ENCODE measurements at regions of chr20 and their contacts with region 1.

Region 1: GRCh38 chr20:22861990-22862389 is 173.1 kb upstream of the SSTR4 start:
- DNase-seq: peak; percentile 43 to 68
- ATAC-seq: peak; percentile 75 to 93 (median 84)
- H3K4me3 ChIP-seq: no peak overlapping the region
- H3K27ac ChIP-seq: peak overlapping the region in 9 of 10 donors; percentile 39 to 85 (median 71)
- H3K4me1 ChIP-seq: peaks cover 0 to 35% (median 5%) of the 10 kb centered on the region in 9 donors
- H3K27me3 ChIP-seq: peaks cover 0 to 6% (median 0%) of the 10 kb centered on the region in 7 donors
- CTCF ChIP-seq: no peak

Region 2: DNA sequence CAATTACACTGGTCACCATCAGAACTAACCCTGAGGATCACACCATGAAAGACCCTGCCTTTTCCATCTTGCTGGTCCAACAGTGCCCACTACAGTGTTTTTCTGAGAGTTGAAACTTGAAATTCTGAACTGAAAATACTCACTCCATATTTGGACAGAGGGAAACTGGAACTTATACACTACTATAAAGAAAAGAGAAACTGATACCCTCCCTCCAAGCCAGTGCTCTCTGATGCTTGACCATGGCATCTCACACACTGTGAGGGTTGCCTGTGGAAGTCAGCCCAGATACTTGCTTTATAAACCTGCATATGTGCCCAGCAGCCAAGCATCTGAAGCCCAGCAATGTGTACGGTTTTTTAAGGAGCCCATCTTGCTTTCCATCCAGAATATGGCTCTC is 386.3 kb before region 1 on chr20:
- intact Hi-C with region 1: no loop called
- DNase-seq: no peak
- ATAC-seq: no peak
- H3K4me3 ChIP-seq: no peak overlapping the region
- H3K27ac ChIP-seq: no peak overlapping the region
- H3K4me1 ChIP-seq: no peaks in the 10 kb centered on the region
- H3K27me3 ChIP-seq: peaks cover 0 to 39% (median 13%) of the 10 kb centered on the region in 7 donors
- CTCF ChIP-seq: no peak

Region 3: DNA sequence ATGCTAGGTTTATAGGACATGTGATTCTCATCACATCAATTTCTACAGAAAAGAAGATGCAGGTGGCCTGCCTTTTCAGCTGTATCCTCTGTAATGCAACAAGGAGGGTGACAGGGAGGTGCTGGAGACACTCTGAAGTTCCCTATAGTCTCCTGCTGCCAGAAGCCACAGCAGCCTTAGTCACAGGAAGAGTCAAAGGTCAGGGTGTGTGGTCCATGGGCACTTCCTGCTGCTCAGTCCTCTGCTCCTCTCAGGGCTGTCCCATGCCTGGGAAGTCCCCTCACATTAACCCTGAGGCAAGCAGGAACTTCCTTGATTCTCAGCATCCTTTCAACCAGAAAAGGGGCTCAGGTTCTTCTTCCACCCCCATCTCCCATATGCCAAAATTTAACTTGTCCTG is 132.8 kb before region 1 on chr20:
- intact Hi-C with region 1: loop called in 3 of 10 experiments (anchors 10 kb)
- DNase-seq: no peak
- ATAC-seq: no peak
- H3K4me3 ChIP-seq: no peak overlapping the region
- H3K27ac ChIP-seq: no peak overlapping the region
- H3K4me1 ChIP-seq: peaks cover 0 to 15% (median 4%) of the 10 kb centered on the region in 9 donors
- H3K27me3 ChIP-seq: peaks cover 0 to 9% (median 0%) of the 10 kb centered on the region in 7 donors
- CTCF ChIP-seq: no peak

Region 4: DNA sequence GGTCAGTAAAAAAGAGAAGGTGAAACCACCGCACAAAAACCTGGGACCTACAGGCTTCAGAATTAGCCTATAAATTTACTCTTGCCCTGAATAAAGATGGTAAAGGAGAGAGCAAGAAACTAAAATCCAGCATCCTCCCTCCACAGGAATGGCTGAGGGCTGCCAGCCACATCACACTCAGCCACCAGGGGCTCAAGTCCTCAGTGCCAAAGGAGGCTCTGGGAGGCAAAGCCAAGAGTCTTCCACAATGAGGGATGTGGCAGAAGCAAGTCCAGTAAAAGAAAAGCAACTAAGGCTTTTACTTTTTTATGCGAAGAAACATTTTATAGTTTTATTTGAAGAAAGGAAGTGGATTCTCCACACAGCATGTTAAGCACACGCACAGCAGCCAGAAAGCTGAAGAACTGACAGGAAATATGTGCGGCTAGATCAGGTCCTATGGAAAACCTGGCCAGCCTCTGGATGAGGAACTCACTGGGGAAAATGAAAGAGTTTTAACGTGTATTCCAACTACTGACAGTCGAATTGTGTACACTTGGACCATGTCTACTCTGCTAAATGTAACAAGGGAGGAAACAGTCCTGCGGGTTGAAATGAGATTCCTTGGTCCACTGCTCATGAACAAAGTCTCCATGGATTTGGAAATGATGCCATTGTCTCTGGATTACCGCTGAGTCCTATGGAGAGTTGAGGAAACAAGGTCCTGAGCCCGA is 46.2 kb before region 1 on chr20:
- intact Hi-C with region 1: no loop called
- DNase-seq: no peak
- ATAC-seq: peak in 1 of 8 donors; percentile 45
- H3K4me3 ChIP-seq: no peak overlapping the region
- H3K27ac ChIP-seq: no peak overlapping the region
- H3K4me1 ChIP-seq: peaks cover 0 to 8% (median 0%) of the 10 kb centered on the region in 9 donors
- H3K27me3 ChIP-seq: peaks cover 0 to 7% (median 0%) of the 10 kb centered on the region in 7 donors
- CTCF ChIP-seq: peak in 4 of 9 donors; percentile 17 to 27 (median 22)

Region 5: DNA sequence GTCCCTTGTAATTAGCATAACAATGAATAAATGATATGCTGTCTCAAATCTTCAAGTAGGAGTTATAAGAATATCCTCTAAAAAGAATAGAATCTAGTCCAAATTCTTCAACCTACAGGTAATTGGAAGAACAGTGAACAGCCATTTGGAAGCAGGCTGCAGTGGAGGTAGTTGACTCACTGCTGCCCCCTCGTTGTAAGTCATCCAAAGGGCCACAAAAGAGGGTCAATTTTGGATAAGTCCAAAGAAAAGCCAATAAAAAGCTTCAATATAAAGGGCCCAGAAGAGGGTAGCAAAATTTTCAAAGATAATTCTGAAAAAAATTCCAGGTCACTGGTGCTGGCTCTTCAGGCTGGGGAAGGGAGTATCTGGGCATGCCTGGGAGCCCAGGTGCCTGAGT is 112.4 kb after region 1 on chr20:
- intact Hi-C with region 1: loop called in 5 of 10 experiments (anchors 2 to 10 kb)
- DNase-seq: no peak
- ATAC-seq: no peak
- H3K4me3 ChIP-seq: no peak overlapping the region
- H3K27ac ChIP-seq: no peak overlapping the region
- H3K4me1 ChIP-seq: peaks cover 3 to 25% (median 16%) of the 10 kb centered on the region in 9 donors
- H3K27me3 ChIP-seq: peaks cover 0 to 22% (median 4%) of the 10 kb centered on the region in 7 donors
- CTCF ChIP-seq: peak in 5 of 9 donors; percentile 18 to 52 (median 18)

Region 6: DNA sequence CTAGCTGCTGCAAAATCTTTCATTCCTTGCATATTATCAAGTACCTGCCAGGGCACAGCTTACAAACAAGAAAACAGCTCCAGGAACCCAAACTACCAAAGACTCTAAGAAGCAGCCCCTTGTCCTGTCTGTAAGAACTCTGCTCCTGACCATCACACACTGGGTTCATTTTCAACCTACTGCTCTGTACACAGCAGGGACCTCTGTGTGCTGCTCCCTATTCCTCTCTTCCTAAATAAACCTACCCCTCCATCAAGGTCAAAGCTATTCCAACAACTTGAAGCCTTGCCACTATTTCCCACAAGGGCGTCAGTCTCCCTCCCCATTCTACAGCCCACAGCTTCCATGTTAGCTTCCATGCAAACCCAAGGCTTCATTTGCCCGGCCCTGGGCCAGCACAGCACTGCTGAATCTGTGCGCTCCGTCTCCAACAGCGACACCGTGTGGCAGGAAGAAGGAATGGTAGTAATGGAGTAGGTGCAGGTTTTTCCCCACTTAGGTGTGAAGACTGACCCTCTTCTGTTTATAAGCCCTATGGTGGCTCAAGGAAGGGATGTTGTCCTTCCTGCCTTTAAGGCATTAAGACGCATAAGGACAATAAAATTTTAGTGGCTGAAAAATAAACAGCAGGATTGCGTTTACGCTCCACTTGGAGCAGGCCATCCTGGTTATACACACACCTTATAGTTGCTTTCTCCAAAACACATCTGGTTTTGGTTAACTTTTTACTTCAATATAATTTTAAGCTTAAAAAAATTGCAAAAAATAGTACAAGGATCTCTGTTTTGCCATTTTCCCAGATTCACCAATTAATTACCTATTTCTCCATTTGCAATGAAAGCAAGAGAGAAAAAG is 373.4 kb after region 1 on chr20:
- intact Hi-C with region 1: loop called in 2 of 10 experiments (anchors 10 kb)
- DNase-seq: peak; percentile 73 to 77
- ATAC-seq: peak; percentile 88 to 95 (median 92)
- H3K4me3 ChIP-seq: no peak overlapping the region
- H3K27ac ChIP-seq: no peak overlapping the region
- H3K4me1 ChIP-seq: peaks cover 0 to 11% (median 0%) of the 10 kb centered on the region in 9 donors
- H3K27me3 ChIP-seq: no peaks in the 10 kb centered on the region
- CTCF ChIP-seq: peak; percentile 81 to 92 (median 89)

Measured in heart right ventricle (tissue), 16 donors.